ENCODE measurements at regions of chr4 and their contacts with region 1.

Region 1: DNA sequence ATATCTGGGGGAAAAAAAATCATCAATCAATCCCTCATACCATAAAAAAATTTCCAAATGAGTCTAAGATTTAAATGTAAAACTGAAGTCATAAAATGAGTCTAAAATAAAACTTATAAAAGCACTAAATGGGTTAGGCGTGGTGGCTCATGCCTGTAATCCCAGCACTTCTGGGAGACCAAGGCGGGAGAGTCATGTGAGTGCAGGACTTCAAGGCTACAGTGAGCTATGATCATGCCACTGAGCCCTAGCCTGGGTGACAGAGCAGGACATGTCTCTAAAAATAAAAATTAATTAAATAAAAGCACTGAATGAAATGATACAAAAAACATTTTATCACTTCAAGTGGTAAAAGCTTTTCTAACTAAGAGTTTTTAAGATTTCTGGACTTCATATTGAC is 83.3 kb downstream of the LRBA start:
- DNase-seq: no peak
- ATAC-seq: no peak
- H3K4me3 ChIP-seq: no peak overlapping the region
- H3K27ac ChIP-seq: no peak overlapping the region
- H3K4me1 ChIP-seq: no peaks in the 10 kb centered on the region
- H3K27me3 ChIP-seq: no peaks in the 10 kb centered on the region
- CTCF ChIP-seq: no peak
- POLR2A ChIP-seq: no peak
- RAD21 ChIP-seq: no peak

Region 2: DNA sequence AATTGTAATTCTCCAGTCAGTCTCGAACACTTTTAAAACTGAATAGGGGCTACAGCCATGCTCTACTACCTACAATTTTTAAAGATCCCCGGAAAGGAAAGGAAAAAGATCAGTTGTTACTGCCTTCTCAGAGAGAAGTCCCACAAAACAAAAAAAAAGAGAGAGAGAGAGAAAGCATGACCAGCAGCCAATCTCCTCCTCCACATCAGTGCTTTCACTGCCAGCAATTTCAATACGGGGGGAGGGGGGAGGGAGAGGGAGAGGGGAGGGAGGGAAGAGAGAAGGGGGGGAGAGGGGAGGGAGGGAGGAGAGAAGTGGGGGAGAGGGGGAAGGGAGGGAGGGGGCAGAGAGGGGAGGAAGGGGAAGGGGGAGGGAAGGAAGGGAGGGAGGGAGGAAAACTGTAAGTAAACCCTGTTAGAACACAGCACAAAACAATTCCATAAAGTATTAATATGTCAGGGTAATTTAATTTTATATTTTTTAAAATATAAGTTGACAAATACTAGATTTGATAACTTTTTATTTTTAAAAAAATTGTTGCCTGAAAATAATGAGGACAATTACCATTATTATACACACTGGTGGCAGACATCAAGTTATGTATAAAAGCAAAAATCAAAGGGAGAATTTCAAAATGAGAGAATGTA is 24.7 kb before region 1 on chr4:
- CTCF ChIA-PET with region 1: no interaction called
- POLR2A ChIA-PET with region 1: no interaction called
- dilution Hi-C with region 1: no loop called
- in situ Hi-C with region 1: no loop called
- intact Hi-C with region 1: loop called (anchors 1 kb)
- DNase-seq: no peak
- ATAC-seq: no peak
- H3K4me3 ChIP-seq: no peak overlapping the region
- H3K27ac ChIP-seq: no peak overlapping the region
- H3K4me1 ChIP-seq: no peaks in the 10 kb centered on the region
- H3K27me3 ChIP-seq: no peaks in the 10 kb centered on the region
- CTCF ChIP-seq: no peak
- POLR2A ChIP-seq: no peak
- RAD21 ChIP-seq: no peak

Region 3: DNA sequence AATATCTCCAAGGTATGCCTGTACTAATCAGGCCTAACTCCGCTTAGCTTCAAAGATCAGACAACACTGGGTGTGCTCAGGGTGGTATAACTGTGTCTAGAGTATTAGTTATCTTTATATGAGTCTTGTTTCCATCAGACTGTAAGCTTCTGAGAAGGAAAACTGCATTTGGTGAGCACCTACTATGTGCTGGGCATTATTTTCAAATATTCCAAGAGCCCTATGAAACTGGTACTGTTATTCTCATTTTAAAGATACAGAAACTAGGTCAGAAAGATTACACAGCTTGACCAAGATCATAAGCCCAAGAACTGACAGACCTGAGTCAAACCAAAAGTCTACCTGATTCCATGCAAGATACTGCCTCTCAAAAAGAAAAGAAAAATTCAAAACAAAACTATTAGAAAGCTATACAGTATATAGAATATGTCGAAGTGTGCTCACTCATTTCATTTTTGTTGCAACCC is 38.9 kb after region 1 on chr4:
- CTCF ChIA-PET with region 1: no interaction called
- POLR2A ChIA-PET with region 1: no interaction called
- dilution Hi-C with region 1: no loop called
- in situ Hi-C with region 1: no loop called
- intact Hi-C with region 1: no loop called
- DNase-seq: no peak
- ATAC-seq: no peak
- H3K4me3 ChIP-seq: no peak overlapping the region
- H3K27ac ChIP-seq: no peak overlapping the region
- H3K4me1 ChIP-seq: no peaks in the 10 kb centered on the region
- H3K27me3 ChIP-seq: no peaks in the 10 kb centered on the region
- CTCF ChIP-seq: no peak
- POLR2A ChIP-seq: no peak
- RAD21 ChIP-seq: no peak

Region 4: DNA sequence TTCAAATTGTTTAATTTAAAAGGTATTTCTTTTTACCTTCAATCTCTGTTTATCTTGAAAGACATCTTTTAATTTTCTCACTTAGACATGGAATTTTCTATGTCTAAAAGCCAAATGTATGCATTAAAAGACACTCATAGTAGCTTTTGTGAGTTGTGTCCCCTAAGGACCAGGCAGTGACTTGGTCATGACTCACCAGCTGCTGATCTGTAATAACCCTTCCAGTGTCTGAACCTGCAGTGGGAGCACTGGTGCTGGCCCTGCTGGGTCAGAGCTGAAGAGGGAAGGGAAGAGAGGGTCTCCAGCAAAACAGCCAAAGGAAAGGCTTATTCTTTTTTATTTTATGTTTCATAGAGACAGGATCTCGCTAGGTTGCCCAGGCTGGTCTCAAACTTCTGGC is 424.7 kb after region 1 on chr4:
- CTCF ChIA-PET with region 1: no interaction called
- POLR2A ChIA-PET with region 1: no interaction called
- dilution Hi-C with region 1: no loop called
- in situ Hi-C with region 1: no loop called
- intact Hi-C with region 1: no loop called
- DNase-seq: peak; percentile 18
- ATAC-seq: no peak
- H3K4me3 ChIP-seq: no peak overlapping the region
- H3K27ac ChIP-seq: no peak overlapping the region
- H3K4me1 ChIP-seq: no peaks in the 10 kb centered on the region
- H3K27me3 ChIP-seq: peaks cover 6% of the 10 kb centered on the region; the same call in 1 of the 2 replicates
- CTCF ChIP-seq: no peak
- POLR2A ChIP-seq: no peak
- RAD21 ChIP-seq: no peak